PC-9 (cell line): ENCODE measurements at regions of chr11 and their contacts with region 1.

Region 1: GRCh38 chr11:75380711-75381420 is 18.5 kb upstream of the RPS3 start:
- DNase-seq: peak; percentile 68 to 92
- H3K4me3 ChIP-seq: no peak overlapping the region
- H3K27ac ChIP-seq: peak overlapping the region; percentile 31
- H3K4me1 ChIP-seq: peaks cover 44% of the 10 kb centered on the region
- H3K27me3 ChIP-seq: no peaks in the 10 kb centered on the region
- CTCF ChIP-seq: no peak

Region 2: DNA sequence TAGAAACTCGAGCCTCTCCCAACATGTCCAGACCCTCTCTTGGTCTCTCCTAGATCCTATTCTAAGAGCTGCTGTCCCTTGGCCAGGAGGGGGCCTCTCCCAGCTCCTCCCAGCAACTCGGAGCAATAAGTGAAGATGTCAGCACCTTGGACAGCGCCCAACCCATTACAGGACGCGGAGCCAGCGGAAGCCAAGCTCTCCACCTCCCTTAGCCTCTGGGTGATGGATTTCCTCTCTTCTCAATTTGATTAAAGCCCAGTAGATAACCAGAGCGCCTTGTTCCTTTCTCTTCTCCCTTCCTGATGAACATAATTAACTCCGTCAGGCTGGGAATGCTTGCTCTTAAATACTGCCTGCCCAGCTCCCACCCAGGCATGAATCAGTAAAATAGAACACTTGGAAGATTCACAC is 166.4 kb before region 1 on chr11:
- CTCF ChIA-PET with region 1: no interaction called
- POLR2A ChIA-PET with region 1: no interaction called
- intact Hi-C with region 1: no loop called
- DNase-seq: peak; percentile 61 to 66
- H3K4me3 ChIP-seq: no peak overlapping the region
- H3K27ac ChIP-seq: no peak overlapping the region
- H3K4me1 ChIP-seq: no peaks in the 10 kb centered on the region
- H3K27me3 ChIP-seq: peaks cover 8% of the 10 kb centered on the region; the same call in 1 of the 2 replicates
- CTCF ChIP-seq: no peak

Region 3: GRCh38 chr11:75280227-75280701 is 100.6 kb before region 1 on chr11:
- CTCF ChIA-PET with region 1: interaction called, 11 read pairs
- POLR2A ChIA-PET with region 1: no interaction called
- intact Hi-C with region 1: loop called (anchors 1 kb)
- DNase-seq: peak; percentile 48 to 73
- H3K4me3 ChIP-seq: no peak overlapping the region
- H3K27ac ChIP-seq: no peak overlapping the region
- H3K4me1 ChIP-seq: no peaks in the 10 kb centered on the region
- H3K27me3 ChIP-seq: no peaks in the 10 kb centered on the region
- CTCF ChIP-seq: peak; percentile 98

Region 4: DNA sequence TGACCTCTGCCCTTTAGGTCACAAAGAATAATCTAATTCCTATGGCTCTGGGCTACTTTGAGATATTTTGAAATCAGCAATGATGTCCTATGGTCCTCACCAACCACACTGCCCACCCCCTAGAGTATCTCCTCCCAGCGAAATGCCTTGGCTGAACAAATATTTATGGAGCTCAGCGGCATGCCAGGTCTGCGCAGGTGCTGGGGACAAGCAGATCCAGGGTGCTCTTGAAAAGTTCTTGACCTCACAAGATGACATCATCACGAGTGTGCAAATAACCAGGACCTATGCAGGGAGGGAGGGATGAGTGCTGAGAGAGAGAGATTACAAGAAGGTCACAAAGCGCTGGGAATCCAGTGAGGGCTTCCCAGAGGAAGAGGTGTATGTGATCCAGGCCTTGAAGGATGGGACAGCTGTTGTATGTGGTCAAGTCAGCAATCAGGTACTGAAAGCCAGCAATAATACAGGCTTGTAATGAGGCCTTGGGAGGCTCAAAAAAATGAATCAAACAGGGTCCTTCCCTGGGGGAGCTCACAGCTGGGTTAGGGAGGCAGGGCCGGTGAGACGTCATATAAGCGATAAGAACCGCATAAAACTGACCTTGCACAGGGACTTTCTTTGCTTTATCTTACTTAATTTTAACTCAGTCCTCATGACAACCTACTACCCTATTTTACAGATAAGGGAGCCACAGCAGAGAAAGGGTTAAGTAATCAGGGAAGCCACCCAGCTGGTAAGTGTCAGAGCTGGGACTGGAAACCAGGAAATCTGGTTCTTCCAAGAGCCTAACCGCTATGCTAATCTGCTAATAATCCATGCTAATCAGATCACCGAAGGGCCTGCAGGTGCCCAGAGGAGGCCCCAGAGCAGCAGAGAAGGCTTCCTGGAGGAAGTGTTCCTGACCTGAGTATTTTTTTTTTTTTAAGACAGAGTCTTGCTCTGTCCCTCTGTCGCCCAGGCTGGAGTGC is 37.7 kb before region 1 on chr11:
- CTCF ChIA-PET with region 1: interaction called, 11 read pairs
- POLR2A ChIA-PET with region 1: no interaction called
- intact Hi-C with region 1: loop called (anchors 5 kb)
- DNase-seq: peak in 1 of 2 experiments; percentile 83
- H3K4me3 ChIP-seq: no peak overlapping the region
- H3K27ac ChIP-seq: no peak overlapping the region
- H3K4me1 ChIP-seq: peaks cover 93% of the 10 kb centered on the region
- H3K27me3 ChIP-seq: no peaks in the 10 kb centered on the region
- CTCF ChIP-seq: no peak

Region 5: DNA sequence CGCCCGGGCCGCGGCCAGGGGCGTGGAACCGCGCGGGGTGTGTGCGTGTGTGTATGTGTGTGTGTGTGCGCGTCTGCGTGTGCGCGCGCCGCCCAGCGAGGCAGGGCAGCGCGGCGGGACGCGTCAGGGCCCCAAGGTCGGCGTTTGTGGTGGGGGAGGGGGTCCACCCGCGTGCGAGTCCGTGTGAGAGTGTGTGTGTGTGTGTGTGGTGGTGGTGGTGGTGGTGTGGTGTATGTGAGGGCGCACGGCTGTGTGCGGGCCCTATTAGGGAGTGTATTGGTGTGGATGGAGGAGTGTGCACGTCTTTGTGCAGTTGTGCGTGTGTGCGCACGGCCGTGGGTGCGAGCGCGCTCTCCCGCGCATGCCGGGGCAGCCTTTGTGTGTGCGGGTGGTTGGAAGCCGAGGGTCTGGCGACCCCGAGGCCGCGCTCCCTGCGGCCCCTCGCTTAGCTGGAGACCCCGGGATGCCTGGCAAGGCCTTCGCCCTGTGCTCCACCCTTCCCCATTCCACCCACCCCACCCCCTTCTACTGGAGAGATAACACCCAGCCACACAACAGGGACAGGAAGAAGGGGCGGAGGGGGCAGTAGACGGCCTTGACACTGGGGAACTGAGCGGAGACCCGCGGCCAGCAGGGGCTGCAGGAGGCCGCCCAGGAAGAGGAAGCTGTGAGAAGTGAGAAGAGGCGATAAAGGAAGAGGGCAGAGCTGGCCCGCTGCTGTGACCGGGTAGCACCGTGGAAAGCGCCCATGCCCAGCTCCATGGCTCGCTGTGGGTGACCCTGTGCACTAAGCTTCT is 28.9 kb before region 1 on chr11:
- CTCF ChIA-PET with region 1: no interaction called
- POLR2A ChIA-PET with region 1: interaction called, 3 read pairs
- intact Hi-C with region 1: loop called (anchors 1 kb)
- DNase-seq: no peak
- H3K4me3 ChIP-seq: peak overlapping the region; percentile 87
- H3K27ac ChIP-seq: no peak overlapping the region
- H3K4me1 ChIP-seq: peaks cover 59% of the 10 kb centered on the region
- H3K27me3 ChIP-seq: no peaks in the 10 kb centered on the region
- CTCF ChIP-seq: no peak; the same call in 1 of the 2 replicates

Region 6: DNA sequence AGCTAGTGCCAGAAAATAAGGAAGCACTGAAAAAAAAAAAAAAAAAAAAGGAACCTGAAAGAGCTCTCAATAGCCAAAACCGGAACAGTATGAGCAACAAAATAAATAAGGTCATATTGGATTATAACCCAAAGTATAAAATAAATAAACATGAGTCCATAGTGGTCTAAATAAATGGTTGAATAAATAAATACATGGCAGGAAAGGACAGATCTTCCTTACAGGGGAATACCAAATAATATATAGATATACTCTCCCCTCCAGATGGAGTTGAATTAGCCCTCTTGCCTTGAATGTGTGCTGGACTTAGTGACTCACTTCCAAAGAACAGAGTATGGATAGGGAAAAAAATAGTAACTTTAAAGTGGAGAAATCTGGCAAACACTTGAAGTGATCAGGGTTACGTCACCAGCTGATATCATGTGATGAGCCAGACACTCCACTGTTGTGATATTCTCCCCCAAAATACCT is 15.1 kb before region 1 on chr11:
- CTCF ChIA-PET with region 1: no interaction called
- POLR2A ChIA-PET with region 1: interaction called, 3 read pairs
- intact Hi-C with region 1: loop called (anchors 2 kb)
- DNase-seq: no peak
- H3K4me3 ChIP-seq: no peak overlapping the region
- H3K27ac ChIP-seq: no peak overlapping the region
- H3K4me1 ChIP-seq: peaks cover 32% of the 10 kb centered on the region
- H3K27me3 ChIP-seq: no peaks in the 10 kb centered on the region
- CTCF ChIP-seq: no peak